HepG2 (cell line): ENCODE measurements at regions of chr2 and their contacts with region 1.

Region 1: DNA sequence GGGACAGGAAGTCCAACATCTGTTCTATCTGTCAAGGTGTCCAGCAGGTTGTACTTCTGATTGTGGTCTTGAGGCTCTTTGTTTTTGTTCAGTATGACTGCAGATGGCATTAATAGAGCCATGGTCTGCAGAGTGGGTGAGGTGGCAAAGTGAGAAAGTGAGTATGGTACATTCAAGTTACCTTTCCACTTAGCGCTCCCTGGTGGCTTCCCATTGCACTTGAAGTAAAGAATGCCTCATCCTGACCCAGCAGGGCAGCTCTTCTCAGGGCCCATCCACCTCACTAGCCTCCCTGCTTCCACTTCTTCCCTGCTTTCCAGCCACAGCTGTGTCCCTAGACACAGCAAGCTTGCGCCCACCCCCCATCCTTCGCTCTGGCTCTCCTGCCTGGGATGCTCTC is 148.0 kb upstream of the ALPP start:
- DNase-seq: peak; percentile 39
- ATAC-seq: peak; percentile 86
- H3K4me3 ChIP-seq: no peak overlapping the region
- H3K27ac ChIP-seq: no peak overlapping the region
- H3K4me1 ChIP-seq: no peaks in the 10 kb centered on the region
- H3K27me3 ChIP-seq: no peaks in the 10 kb centered on the region
- CTCF ChIP-seq: peak; percentile 62
- EP300 ChIP-seq: no peak
- POLR2A ChIP-seq: no peak
- RAD21 ChIP-seq: peak; percentile 41; the same call in 1 of the 2 replicates

Region 2: GRCh38 chr2:231146665-231147064 is 1083.9 kb before region 1 on chr2:
- CTCF ChIA-PET with region 1: no interaction called
- POLR2A ChIA-PET with region 1: no interaction called
- in situ Hi-C with region 1: no loop called
- intact Hi-C with region 1: loop called (anchors 5 kb)
- DNase-seq: no peak
- ATAC-seq: no peak
- H3K4me3 ChIP-seq: no peak overlapping the region
- H3K27ac ChIP-seq: no peak overlapping the region
- H3K4me1 ChIP-seq: no peaks in the 10 kb centered on the region
- H3K27me3 ChIP-seq: no peaks in the 10 kb centered on the region
- CTCF ChIP-seq: no peak
- EP300 ChIP-seq: no peak
- POLR2A ChIP-seq: no peak
- RAD21 ChIP-seq: no peak

Region 3: GRCh38 chr2:232126301-232127099 is 104.1 kb before region 1 on chr2:
- CTCF ChIA-PET with region 1: no interaction called
- POLR2A ChIA-PET with region 1: no interaction called
- in situ Hi-C with region 1: no loop called
- intact Hi-C with region 1: no loop called
- DNase-seq: no peak
- ATAC-seq: no peak
- H3K4me3 ChIP-seq: no peak overlapping the region
- H3K27ac ChIP-seq: no peak overlapping the region
- H3K4me1 ChIP-seq: peaks cover 8% of the 10 kb centered on the region; the same call in 1 of the 2 replicates
- H3K27me3 ChIP-seq: no peaks in the 10 kb centered on the region
- CTCF ChIP-seq: no peak
- EP300 ChIP-seq: no peak
- POLR2A ChIP-seq: no peak
- RAD21 ChIP-seq: no peak

Region 4: DNA sequence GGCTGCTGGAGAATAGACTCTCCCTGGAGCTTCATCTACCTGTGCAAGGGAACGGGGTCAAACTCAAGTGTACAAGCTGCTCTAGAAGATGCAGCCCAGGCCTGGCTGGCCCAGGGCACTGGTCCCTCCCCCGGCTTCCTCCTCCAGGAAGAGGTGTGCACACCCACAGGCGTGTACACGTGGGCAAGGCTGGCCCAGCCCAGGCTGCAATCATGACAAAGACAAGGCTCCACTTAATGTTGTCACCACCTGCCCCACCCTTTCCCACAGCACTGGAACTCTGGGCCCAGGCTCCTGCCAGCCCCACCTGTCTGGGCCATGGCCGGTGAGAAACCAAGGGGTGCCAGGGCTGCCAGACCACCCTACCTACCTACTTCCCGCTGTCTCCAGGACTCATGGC is 118.4 kb after region 1 on chr2:
- CTCF ChIA-PET with region 1: no interaction called
- POLR2A ChIA-PET with region 1: no interaction called
- in situ Hi-C with region 1: no loop called
- intact Hi-C with region 1: no loop called
- DNase-seq: no peak
- ATAC-seq: no peak
- H3K4me3 ChIP-seq: no peak overlapping the region
- H3K27ac ChIP-seq: no peak overlapping the region
- H3K4me1 ChIP-seq: peaks cover 10% of the 10 kb centered on the region
- H3K27me3 ChIP-seq: peaks cover 18 to 63% of the 10 kb centered on the region in 2 experiments
- CTCF ChIP-seq: no peak
- EP300 ChIP-seq: no peak
- POLR2A ChIP-seq: no peak
- RAD21 ChIP-seq: no peak